ENCODE measurements at regions of chr3 and their contacts with region 1.

Region 1: GRCh38 chr3:111616417-111617105 is 21.4 kb upstream of the ZBED2 start:
- DNase-seq: peak; percentile 67
- H3K4me3 Mint-ChIP-seq: no peak overlapping the region
- H3K27ac Mint-ChIP-seq: peak overlapping the region; percentile 90
- H3K4me1 Mint-ChIP-seq: peaks cover 69% of the 10 kb centered on the region
- H3K27me3 Mint-ChIP-seq: no peaks in the 10 kb centered on the region

Region 2: GRCh38 chr3:111594205-111594604 is 22.4 kb before region 1 on chr3:
- CTCF ChIA-PET with region 1: interaction called, 34 read pairs
- POLR2A ChIA-PET with region 1: interaction called, 9 read pairs
- DNase-seq: no peak
- H3K4me3 Mint-ChIP-seq: peak overlapping the region; percentile 28
- H3K27ac Mint-ChIP-seq: peak overlapping the region; percentile 73
- H3K4me1 Mint-ChIP-seq: peaks cover 68% of the 10 kb centered on the region
- H3K27me3 Mint-ChIP-seq: no peaks in the 10 kb centered on the region

Region 3: DNA sequence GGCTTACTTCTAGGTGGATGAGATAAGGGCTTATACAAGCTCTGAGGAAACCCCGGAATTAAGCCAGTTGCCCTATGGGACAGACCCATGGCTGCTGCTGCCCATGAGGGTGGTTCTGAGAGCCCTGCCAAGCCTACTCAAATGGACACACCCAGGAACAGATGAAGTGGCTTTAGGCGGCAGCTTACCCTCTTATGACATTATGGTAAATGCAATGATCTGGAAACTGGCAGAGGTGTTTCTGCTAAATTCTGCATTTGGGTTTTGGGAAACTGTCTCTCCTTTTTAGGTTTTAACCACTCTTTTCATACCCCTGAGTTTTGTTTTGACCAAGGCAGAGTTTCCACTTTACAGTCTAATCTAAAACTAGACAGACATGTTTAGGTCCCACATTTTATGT is 12.4 kb before region 1 on chr3:
- CTCF ChIA-PET with region 1: interaction called, 34 read pairs
- POLR2A ChIA-PET with region 1: interaction called, 3 read pairs
- DNase-seq: no peak
- H3K4me3 Mint-ChIP-seq: no peak overlapping the region
- H3K27ac Mint-ChIP-seq: peak overlapping the region; percentile 54
- H3K4me1 Mint-ChIP-seq: peaks cover 69% of the 10 kb centered on the region
- H3K27me3 Mint-ChIP-seq: no peaks in the 10 kb centered on the region

Measured in activated CD4-positive, alpha-beta T cell treated with anti-CD3 and anti-CD28 coated beads, Interleukin-2, amount 10 ng/mL, durations not matched to agents 7 days and 5 days (primary cell).